ENCODE measurements at regions of chr1 and their contacts with region 1.

Region 1: DNA sequence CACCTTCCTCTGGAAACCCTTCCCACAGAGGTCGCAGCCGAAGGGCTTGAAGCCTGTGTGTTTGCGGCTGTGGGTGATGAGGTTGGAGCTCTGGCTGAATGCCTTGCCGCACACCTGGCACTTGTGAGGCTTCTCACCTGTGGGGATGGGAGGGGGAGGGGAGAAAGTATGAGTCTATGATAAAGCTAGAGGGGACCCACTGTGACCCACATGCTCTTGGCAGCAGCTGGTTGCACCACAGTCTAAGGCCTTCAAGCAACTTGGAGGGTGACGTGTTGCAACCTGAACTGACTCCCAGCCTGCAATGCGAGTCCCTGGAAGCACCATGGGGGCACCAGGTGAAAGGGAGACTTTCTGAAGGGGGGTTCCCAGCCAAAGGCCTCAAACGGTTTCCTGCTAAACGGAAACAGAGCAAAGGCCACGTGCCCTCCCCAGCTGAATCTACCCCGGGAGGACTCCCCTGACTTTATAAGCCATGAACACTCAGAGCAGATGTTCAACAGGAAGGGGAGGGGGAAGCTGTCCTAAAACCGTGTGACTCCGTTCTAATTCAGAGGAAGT is 10.6 kb downstream of the GFI1 start:
- DNase-seq: peak; percentile 94
- H3K4me3 Mint-ChIP-seq: peak overlapping the region; percentile 53
- H3K27ac Mint-ChIP-seq: peak overlapping the region; percentile 87
- H3K4me1 Mint-ChIP-seq: peaks cover 85% of the 10 kb centered on the region
- H3K27me3 Mint-ChIP-seq: no peaks in the 10 kb centered on the region

Region 2: DNA sequence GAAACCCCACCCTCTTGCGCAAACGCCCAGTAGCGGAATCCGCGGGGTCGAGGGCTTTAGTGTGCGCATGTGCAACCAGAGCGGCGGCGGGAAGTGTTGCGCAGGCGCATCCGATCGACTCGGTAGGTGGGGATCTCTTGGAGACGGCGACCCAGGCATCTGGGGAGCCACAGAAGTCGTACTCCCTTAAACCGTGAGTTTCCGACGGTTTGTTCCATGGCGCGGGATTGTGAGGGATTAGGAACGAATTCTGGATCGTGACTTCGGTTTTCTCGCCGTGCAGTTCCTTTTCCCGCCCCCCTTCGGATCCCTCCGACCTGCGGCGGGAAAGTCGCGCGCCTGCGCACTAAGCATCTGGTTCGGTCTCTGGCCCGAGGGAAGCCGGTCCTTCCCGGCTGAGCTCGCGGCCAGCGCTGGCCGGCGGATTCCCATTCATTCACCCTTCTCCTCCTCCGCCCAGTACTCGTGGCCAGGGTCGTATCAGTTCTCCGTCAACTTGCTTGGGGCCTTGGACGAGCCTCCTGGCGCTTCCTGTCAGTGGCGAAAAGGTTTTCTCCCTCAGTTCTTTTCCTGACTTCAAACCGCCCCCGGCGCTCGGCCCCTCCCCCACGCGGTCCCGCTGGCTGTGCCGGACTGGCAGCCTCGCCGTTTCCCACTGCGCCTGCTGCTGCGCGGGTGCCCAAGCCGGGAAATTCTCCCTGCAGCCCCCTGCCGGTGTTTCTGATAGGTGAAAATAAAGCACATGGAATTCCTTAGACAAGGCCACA is 975.2 kb before region 1 on chr1 and contains the start of gene CDC7:
- CTCF ChIA-PET with region 1: no interaction called
- intact Hi-C with region 1: loop called (anchors 10 kb)
- DNase-seq: peak; percentile 87
- H3K4me3 Mint-ChIP-seq: no peak within 1 kb of the TSS
- H3K27ac Mint-ChIP-seq: no peak within 1 kb of the TSS
- H3K4me1 Mint-ChIP-seq: peaks cover 15% of the 10 kb centered on the region
- H3K27me3 Mint-ChIP-seq: no peaks in the 10 kb centered on the region
- total RNA-seq, gene CDC7: 27.0 TPM

Region 3: DNA sequence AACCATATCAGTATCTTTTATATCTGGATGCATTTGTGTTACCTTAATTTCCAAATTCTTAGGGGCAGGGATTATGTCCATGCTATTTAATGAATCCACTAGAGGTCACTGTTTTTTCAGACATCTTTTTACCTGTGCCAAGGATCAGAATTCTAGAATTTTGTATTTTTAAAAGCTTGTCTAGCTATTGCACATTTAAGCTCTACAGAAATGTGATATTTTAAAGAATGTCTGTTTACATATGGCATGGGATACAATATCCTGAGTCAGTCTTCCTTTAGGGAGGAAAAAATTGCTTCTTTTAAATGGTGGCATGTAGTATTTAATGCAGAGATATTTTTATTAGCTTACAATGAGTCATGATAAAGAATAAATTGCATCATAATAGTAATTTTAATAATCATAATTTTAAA is 166.0 kb before region 1 on chr1:
- CTCF ChIA-PET with region 1: interaction called, 17 read pairs
- intact Hi-C with region 1: loop called (anchors 2 kb)
- DNase-seq: no peak
- H3K4me3 Mint-ChIP-seq: no peak overlapping the region
- H3K27ac Mint-ChIP-seq: no peak overlapping the region
- H3K4me1 Mint-ChIP-seq: peaks cover 37% of the 10 kb centered on the region
- H3K27me3 Mint-ChIP-seq: no peaks in the 10 kb centered on the region

Region 4: DNA sequence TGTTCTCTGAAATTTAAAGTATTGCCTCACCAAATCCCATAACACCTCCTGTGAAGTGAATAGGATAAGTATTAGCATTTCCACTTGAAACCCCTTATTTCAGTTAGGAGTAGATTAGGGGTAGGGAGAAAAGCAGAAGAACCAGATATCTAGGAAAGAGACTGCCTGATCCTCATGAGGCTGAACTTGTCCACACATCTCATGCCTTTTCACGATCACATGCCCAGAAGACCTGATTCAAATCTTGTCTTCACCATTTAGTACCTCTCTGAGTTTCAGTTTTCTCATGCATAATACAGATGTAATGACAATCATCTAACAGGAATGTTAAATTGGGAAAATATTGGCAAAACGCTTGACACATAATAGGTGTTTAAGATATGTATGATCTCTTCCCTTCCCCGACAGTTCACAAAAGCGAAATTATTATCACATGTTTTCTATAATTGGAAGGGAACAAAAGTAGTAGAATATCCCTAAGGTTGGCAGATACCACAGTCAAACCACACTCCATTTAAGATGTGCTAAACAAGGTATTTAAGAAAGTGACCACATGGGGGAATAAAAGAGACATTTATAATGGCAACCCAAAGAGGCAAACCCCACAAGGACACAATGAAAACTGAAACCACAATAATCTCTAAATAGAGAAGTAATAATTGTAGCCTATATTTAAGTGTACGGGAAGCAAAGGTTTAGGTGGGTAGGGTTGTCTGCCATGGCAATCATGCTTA is 14.6 kb before region 1 on chr1:
- CTCF ChIA-PET with region 1: interaction called, 4 read pairs
- intact Hi-C with region 1: loop called (anchors 1 kb)
- DNase-seq: no peak
- H3K4me3 Mint-ChIP-seq: no peak overlapping the region
- H3K27ac Mint-ChIP-seq: no peak overlapping the region
- H3K4me1 Mint-ChIP-seq: peaks cover 50% of the 10 kb centered on the region
- H3K27me3 Mint-ChIP-seq: no peaks in the 10 kb centered on the region

Region 5: GRCh38 chr1:92583821-92584760 is 107.9 kb after region 1 on chr1:
- CTCF ChIA-PET with region 1: interaction called, 6 read pairs
- intact Hi-C with region 1: loop called (anchors 1 kb)
- DNase-seq: no peak
- H3K4me3 Mint-ChIP-seq: peak overlapping the region; percentile 45
- H3K27ac Mint-ChIP-seq: peak overlapping the region; percentile 88
- H3K4me1 Mint-ChIP-seq: peaks cover 72% of the 10 kb centered on the region
- H3K27me3 Mint-ChIP-seq: no peaks in the 10 kb centered on the region

Region 6: GRCh38 chr1:92623187-92623778 is 147.1 kb after region 1 on chr1:
- CTCF ChIA-PET with region 1: no interaction called
- intact Hi-C with region 1: no loop called
- DNase-seq: no peak
- H3K4me3 Mint-ChIP-seq: no peak overlapping the region
- H3K27ac Mint-ChIP-seq: no peak overlapping the region
- H3K4me1 Mint-ChIP-seq: peaks cover 16% of the 10 kb centered on the region
- H3K27me3 Mint-ChIP-seq: no peaks in the 10 kb centered on the region

Region 7: DNA sequence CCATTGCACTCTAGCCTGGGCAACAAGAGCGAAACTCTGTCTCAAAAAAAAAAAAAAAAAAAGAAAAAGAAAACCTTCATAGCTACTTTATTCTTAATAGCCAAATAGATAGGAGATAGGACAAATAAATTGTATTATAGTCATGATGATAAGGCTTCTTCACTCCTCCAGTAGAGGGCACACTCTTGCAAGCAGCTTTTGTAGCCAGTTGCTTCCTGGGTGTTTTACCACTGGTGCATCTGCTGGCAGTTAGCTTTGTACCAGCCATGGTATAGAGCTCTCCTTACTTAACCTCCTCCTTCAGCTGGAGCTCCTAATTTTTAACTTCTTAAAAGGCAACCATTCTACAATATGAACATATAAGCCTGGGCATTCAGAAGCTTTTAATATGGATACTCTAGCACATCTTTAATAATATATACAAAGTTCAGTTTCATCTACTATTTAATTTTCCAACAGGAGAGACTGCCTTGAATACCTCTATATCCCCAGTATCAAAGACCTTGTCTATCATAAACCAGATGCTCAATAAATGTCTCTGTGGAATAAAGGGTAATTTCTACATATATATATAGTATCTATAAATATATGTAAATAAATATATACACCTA is 273.0 kb after region 1 on chr1:
- CTCF ChIA-PET with region 1: no interaction called
- intact Hi-C with region 1: no loop called
- DNase-seq: peak; percentile 60
- H3K4me3 Mint-ChIP-seq: no peak overlapping the region
- H3K27ac Mint-ChIP-seq: no peak overlapping the region
- H3K4me1 Mint-ChIP-seq: no peaks in the 10 kb centered on the region
- H3K27me3 Mint-ChIP-seq: no peaks in the 10 kb centered on the region

Region 8: GRCh38 chr1:92975551-92976232 is 499.5 kb after region 1 on chr1:
- CTCF ChIA-PET with region 1: no interaction called
- intact Hi-C with region 1: loop called (anchors 5 kb)
- DNase-seq: no peak
- H3K4me3 Mint-ChIP-seq: no peak overlapping the region
- H3K27ac Mint-ChIP-seq: peak overlapping the region; percentile 38
- H3K4me1 Mint-ChIP-seq: peaks cover 62% of the 10 kb centered on the region
- H3K27me3 Mint-ChIP-seq: no peaks in the 10 kb centered on the region

Region 9: GRCh38 chr1:93033785-93034184 is 557.6 kb after region 1 on chr1:
- CTCF ChIA-PET with region 1: no interaction called
- intact Hi-C with region 1: no loop called
- DNase-seq: no peak
- H3K4me3 Mint-ChIP-seq: no peak overlapping the region
- H3K27ac Mint-ChIP-seq: no peak overlapping the region
- H3K4me1 Mint-ChIP-seq: peaks cover 29% of the 10 kb centered on the region
- H3K27me3 Mint-ChIP-seq: no peaks in the 10 kb centered on the region